ENCODE measurements at regions of chr1 and their contacts with region 1.

Region 1: DNA sequence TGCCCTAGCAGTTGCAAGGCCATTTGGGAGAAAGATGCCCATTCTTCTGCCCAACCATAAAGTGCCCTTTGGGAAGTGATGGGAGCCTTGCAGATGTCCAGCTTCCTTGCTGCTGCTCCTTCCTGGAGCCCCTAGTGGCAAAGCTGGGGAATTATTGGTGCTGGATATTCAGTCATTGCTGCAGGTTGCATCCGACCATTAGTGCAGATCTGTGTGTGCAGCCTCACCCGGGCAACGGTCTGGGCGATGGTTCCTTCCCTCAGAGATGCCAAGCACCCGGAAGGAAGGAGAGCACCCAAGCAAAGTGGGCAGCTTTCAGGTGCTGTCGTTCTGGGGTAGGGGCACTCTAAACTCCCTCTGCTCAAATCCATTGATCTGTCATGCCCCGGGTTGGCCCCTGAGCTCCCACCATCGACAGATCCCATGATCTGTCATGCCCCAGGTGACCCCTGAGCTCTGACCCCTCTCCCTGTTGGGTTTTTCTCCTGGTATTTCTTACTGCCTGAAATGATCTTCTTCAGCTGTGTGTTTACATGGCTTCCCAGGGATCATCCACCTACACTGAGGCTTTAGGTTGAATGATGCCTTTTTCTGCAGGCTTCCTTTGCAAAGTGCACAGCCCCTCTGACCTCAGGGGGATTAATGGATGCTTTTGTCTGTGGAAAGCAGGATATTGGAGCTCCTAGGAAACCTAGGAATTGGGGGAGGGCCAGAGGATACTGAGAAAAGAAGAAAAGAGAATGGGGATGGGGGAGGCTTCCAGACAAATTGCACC is 467.5 kb downstream of the PTPRU start:
- DNase-seq: peak; percentile 59
- H3K4me3 Mint-ChIP-seq: no peak overlapping the region
- H3K27ac Mint-ChIP-seq: no peak overlapping the region
- H3K4me1 Mint-ChIP-seq: peaks cover 11% of the 10 kb centered on the region
- H3K27me3 Mint-ChIP-seq: peaks cover 14% of the 10 kb centered on the region
- CTCF ChIP-seq: peak; percentile 79

Region 2: GRCh38 chr1:29379443-29380073 is 324.2 kb before region 1 on chr1:
- CTCF ChIA-PET with region 1: interaction called, 5 read pairs
- POLR2A ChIA-PET with region 1: no interaction called
- intact Hi-C with region 1: loop called (anchors 10 kb)
- DNase-seq: peak; percentile 44
- H3K4me3 Mint-ChIP-seq: no peak overlapping the region
- H3K27ac Mint-ChIP-seq: no peak overlapping the region
- H3K4me1 Mint-ChIP-seq: no peaks in the 10 kb centered on the region
- H3K27me3 Mint-ChIP-seq: peaks cover 29% of the 10 kb centered on the region
- CTCF ChIP-seq: peak; percentile 63

Region 3: GRCh38 chr1:29688471-29689365 is 15.1 kb before region 1 on chr1:
- CTCF ChIA-PET with region 1: interaction called, 13 read pairs
- POLR2A ChIA-PET with region 1: no interaction called
- intact Hi-C with region 1: no loop called
- DNase-seq: no peak
- H3K4me3 Mint-ChIP-seq: no peak overlapping the region
- H3K27ac Mint-ChIP-seq: no peak overlapping the region
- H3K4me1 Mint-ChIP-seq: peaks cover 22% of the 10 kb centered on the region
- H3K27me3 Mint-ChIP-seq: peaks cover 21% of the 10 kb centered on the region
- CTCF ChIP-seq: no peak

Region 4: DNA sequence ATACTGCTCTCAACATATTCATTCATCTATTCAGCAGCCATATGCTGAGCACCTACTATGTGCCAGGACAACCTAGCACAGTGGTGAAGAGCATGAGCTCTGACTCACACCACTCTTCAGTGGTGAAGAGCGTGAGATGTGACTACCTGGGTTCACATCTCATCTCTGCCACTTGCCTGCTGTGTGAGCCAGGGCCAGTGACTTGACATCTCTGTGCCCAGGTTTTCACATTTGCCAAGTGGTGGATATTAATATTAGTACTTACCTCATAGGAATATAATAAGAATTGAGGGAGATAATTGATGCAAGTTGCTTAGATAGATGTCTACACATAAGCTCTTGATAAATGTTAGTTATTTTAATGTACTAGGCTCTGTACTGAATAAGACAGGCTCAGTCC is 21.5 kb after region 1 on chr1:
- CTCF ChIA-PET with region 1: no interaction called
- POLR2A ChIA-PET with region 1: no interaction called
- intact Hi-C with region 1: no loop called
- DNase-seq: no peak
- H3K4me3 Mint-ChIP-seq: no peak overlapping the region
- H3K27ac Mint-ChIP-seq: no peak overlapping the region
- H3K4me1 Mint-ChIP-seq: no peaks in the 10 kb centered on the region
- H3K27me3 Mint-ChIP-seq: no peaks in the 10 kb centered on the region
- CTCF ChIP-seq: no peak

Region 5: DNA sequence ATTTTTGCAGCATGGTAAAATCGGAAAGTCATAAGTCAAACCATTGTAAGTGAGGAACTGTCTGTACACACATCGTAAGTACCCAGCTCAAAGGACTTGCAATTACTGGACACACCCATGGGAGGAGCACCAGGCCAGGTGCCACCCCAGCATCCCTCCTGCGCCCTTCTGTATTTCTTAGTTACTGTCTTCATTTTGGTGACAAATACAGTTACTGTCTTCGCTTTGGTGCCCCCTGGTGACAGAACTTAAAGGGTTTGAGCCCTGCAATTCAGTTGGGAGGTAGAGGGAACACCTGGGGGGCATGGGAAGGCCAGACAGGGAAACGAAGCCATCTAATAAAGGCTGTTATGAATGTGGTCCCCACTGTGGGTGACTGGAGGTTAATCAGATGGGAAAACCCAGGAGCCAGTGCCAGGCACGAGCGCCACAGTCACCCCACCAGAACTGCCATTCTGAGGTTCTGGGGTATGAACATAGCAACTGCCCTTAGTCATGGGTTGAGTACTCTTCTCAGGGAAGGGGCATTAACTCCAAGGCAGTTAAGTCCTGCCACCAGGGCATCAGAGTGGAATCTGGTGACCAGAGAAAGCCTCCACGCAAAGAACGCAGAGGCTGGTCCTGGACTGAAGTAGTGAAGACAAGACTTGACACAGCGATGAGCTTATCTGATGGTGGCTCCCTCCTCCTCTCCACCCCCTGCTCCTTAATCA is 145.4 kb after region 1 on chr1:
- CTCF ChIA-PET with region 1: interaction called, 4 read pairs
- POLR2A ChIA-PET with region 1: no interaction called
- intact Hi-C with region 1: loop called (anchors 1 kb)
- DNase-seq: peak; percentile 62
- H3K4me3 Mint-ChIP-seq: no peak overlapping the region
- H3K27ac Mint-ChIP-seq: no peak overlapping the region
- H3K4me1 Mint-ChIP-seq: no peaks in the 10 kb centered on the region
- H3K27me3 Mint-ChIP-seq: peaks cover 67% of the 10 kb centered on the region
- CTCF ChIP-seq: peak; percentile 51

Region 6: GRCh38 chr1:29883411-29883832 is 179.6 kb after region 1 on chr1:
- CTCF ChIA-PET with region 1: interaction called, 4 read pairs
- POLR2A ChIA-PET with region 1: no interaction called
- intact Hi-C with region 1: loop called (anchors 5 kb)
- DNase-seq: no peak
- H3K4me3 Mint-ChIP-seq: no peak overlapping the region
- H3K27ac Mint-ChIP-seq: no peak overlapping the region
- H3K4me1 Mint-ChIP-seq: no peaks in the 10 kb centered on the region
- H3K27me3 Mint-ChIP-seq: peaks cover 11% of the 10 kb centered on the region
- CTCF ChIP-seq: no peak